PC-9 (cell line): ENCODE measurements at regions of chr21 and their contacts with region 1.

Region 1: DNA sequence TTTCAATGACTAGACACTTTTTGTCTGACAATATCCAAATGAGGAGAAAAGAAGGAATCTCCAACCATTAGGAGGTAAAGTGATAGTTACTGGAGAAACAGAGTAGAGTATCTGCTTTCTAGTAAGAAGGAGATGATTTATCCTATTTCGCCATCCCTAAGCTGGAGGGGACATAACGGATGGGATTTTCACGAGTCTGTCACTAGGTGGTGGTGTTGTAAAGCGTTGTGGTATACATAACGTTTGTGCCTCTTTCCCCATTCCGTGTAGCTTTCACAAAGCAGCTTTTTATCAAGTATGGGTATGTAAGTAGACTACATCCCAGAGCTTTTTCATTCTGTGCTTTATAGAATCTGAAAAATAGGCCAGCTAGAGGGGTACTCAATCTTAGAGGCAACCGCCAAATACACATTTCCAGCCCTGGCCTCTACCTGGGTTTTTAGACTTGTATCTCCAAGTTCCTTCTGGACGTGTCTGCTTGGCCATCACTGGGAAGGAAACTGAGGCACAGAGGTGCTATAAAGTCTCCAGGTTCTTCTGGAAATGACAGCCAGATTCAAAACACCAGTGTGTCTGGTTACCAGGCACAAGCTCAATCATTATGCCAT is 33.3 kb upstream of the FAM3B start:
- DNase-seq: peak; percentile 43 to 69
- H3K4me3 ChIP-seq: no peak overlapping the region
- H3K27ac ChIP-seq: no peak overlapping the region
- H3K4me1 ChIP-seq: no peaks in the 10 kb centered on the region
- H3K27me3 ChIP-seq: no peaks in the 10 kb centered on the region
- CTCF ChIP-seq: peak; percentile 76

Region 2: GRCh38 chr21:41068967-41069642 is 214.2 kb before region 1 on chr21:
- CTCF ChIA-PET with region 1: no interaction called
- POLR2A ChIA-PET with region 1: no interaction called
- intact Hi-C with region 1: no loop called
- DNase-seq: peak in 1 of 2 experiments; percentile 45
- H3K4me3 ChIP-seq: no peak overlapping the region
- H3K27ac ChIP-seq: no peak overlapping the region
- H3K4me1 ChIP-seq: no peaks in the 10 kb centered on the region
- H3K27me3 ChIP-seq: peaks cover 77% of the 10 kb centered on the region
- CTCF ChIP-seq: peak; percentile 68

Region 3: GRCh38 chr21:41121785-41122421 is 161.4 kb before region 1 on chr21:
- CTCF ChIA-PET with region 1: no interaction called
- POLR2A ChIA-PET with region 1: no interaction called
- intact Hi-C with region 1: loop called (anchors 5 kb)
- DNase-seq: peak; percentile 56 to 76
- H3K4me3 ChIP-seq: no peak overlapping the region
- H3K27ac ChIP-seq: no peak overlapping the region
- H3K4me1 ChIP-seq: no peaks in the 10 kb centered on the region
- H3K27me3 ChIP-seq: peaks cover 3% of the 10 kb centered on the region
- CTCF ChIP-seq: peak; percentile 84

Region 4: GRCh38 chr21:41176881-41177741 is 106.2 kb before region 1 on chr21:
- CTCF ChIA-PET with region 1: no interaction called
- POLR2A ChIA-PET with region 1: no interaction called
- intact Hi-C with region 1: no loop called
- DNase-seq: no peak
- H3K4me3 ChIP-seq: no peak overlapping the region
- H3K27ac ChIP-seq: no peak overlapping the region
- H3K4me1 ChIP-seq: no peaks in the 10 kb centered on the region
- H3K27me3 ChIP-seq: no peaks in the 10 kb centered on the region
- CTCF ChIP-seq: no peak

Region 5: DNA sequence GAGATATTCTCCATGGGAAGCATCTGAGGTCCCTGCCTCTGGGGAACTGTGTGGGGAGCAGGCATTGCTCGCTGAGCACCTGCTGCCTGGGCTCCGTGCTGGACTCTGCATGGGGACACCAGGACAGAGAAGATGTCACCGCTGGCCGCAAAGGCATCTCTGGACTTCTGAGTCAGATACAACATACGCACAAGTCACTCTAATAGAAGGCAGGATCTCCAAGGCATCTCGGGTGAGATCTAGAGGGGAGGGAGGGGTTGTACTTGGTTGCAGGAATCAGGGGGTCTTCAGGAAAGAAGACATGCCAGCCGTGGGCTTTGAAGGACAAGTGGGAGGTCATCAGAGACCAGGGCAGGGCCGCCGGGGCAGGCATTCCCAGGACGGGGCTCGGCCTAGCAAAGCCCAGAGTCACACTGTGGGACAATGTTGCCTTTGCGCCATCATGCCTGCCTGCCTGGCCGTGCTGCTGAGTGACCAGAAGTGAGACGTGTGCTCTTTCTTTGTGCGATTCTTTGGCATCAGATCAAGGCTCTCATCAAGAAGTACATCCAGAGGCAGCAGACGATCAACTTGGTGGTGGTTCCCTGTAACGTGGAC is 106.8 kb after region 1 on chr21:
- CTCF ChIA-PET with region 1: interaction called, 16 read pairs
- POLR2A ChIA-PET with region 1: no interaction called
- intact Hi-C with region 1: no loop called
- DNase-seq: no peak
- H3K4me3 ChIP-seq: no peak overlapping the region
- H3K27ac ChIP-seq: no peak overlapping the region
- H3K4me1 ChIP-seq: no peaks in the 10 kb centered on the region
- H3K27me3 ChIP-seq: no peaks in the 10 kb centered on the region
- CTCF ChIP-seq: no peak

Region 6: GRCh38 chr21:41460578-41461527 is 177.5 kb after region 1 on chr21:
- CTCF ChIA-PET with region 1: interaction called, 6 read pairs
- POLR2A ChIA-PET with region 1: no interaction called
- intact Hi-C with region 1: loop called (anchors 1 kb)
- DNase-seq: peak in 1 of 2 experiments; percentile 56
- H3K4me3 ChIP-seq: no peak overlapping the region
- H3K27ac ChIP-seq: no peak overlapping the region
- H3K4me1 ChIP-seq: no peaks in the 10 kb centered on the region
- H3K27me3 ChIP-seq: no peaks in the 10 kb centered on the region
- CTCF ChIP-seq: peak; percentile 74

Region 7: DNA sequence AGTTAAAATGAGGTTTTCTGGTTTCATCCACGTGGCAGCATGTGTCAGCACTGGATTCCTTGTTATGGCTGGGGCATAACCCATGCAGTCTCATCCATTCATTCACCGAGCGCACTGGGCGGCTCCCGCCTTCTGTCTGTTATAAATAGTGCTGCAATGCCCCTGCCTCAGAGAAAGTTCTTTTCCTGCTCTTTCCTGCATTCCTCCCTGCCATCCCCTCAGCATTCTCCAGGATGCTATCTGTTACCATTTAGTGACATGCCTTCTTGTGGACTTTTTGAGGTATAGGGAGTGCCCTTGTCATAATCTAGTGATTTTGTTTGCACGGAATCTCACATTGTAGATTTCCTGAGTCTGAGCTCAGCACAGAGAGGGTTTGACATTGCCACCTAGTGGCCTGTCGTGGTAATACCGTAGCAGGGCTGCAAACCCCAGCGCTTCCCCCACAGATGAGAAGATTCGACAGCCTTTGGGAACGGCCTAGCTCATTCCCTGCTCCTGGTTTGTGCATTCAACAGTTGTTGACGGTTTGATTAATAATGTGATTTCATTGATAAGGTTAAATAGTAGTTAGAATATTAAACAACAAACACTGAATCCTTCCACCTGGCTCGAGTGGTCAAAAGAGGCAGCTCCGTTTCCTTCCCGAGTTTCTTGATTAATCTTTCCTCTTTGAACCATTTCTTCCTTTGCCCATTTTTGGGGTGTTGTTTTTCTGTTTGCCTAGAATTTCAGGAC is 834.1 kb after region 1 on chr21:
- CTCF ChIA-PET with region 1: no interaction called
- POLR2A ChIA-PET with region 1: no interaction called
- intact Hi-C with region 1: loop called (anchors 5 kb)
- DNase-seq: peak; percentile 47 to 69
- H3K4me3 ChIP-seq: no peak overlapping the region
- H3K27ac ChIP-seq: no peak overlapping the region
- H3K4me1 ChIP-seq: peaks cover 32% of the 10 kb centered on the region
- H3K27me3 ChIP-seq: no peaks in the 10 kb centered on the region
- CTCF ChIP-seq: peak; percentile 89